BJ (cell line): ENCODE measurements at regions of chr12 and their contacts with region 1.

Region 1: DNA sequence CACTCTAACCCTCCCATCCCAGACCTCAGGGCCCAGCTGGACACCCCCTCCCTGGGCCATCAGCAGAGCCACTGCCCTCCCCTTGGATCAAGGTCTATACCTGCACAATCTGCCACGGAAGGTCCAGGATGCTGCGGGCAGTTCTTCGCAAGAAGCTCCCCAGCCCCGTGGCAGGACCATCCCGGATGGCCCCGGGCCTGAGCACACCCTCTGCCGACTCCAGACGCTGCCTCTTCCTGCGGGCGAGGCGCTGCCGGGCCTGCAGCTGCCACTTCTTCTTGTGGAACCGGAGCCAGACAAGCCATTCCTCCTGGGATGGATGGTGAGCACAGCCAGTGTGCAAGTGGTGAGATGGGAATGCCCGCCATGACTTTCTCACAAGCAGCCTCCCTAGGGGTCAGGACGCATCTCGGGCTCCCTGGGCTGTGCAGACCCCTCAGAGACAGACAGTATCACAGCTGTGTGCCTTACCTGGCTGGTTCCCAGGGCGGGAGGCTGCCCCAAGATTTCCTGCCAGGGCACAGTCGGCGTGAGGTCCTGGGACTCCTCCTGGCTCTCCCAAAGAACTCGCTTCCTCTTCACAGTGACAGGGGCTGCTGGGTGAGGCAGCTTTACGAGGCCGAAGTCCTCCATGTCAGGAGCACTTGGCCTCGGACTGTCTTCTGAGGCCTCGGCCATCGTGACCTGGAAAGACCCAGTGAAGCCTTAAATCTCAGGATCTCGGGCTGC is 30.8 kb downstream of the P2RX2 start:
- DNase-seq: no peak
- H3K4me3 ChIP-seq: no peak overlapping the region
- H3K27me3 ChIP-seq: no peaks in the 10 kb centered on the region
- CTCF ChIP-seq: no peak

Region 2: GRCh38 chr12:132582058-132582420 is 67.3 kb before region 1 on chr12:
- CTCF ChIA-PET with region 1: no interaction called
- POLR2A ChIA-PET with region 1: no interaction called
- DNase-seq: no peak
- H3K4me3 ChIP-seq: no peak overlapping the region
- H3K27me3 ChIP-seq: no peaks in the 10 kb centered on the region
- CTCF ChIP-seq: no peak

Region 3: GRCh38 chr12:132638541-132639418 is 10.6 kb before region 1 on chr12:
- CTCF ChIA-PET with region 1: interaction called, 15 read pairs
- POLR2A ChIA-PET with region 1: no interaction called
- DNase-seq: peak; percentile 17
- H3K4me3 ChIP-seq: no peak overlapping the region
- H3K27me3 ChIP-seq: no peaks in the 10 kb centered on the region
- CTCF ChIP-seq: peak; percentile 88